T-cell (primary cell): ENCODE measurements at regions of chr22 and their contacts with region 1.

Region 1: GRCh38 chr22:44697423-44698141 is 4.4 kb upstream of the PRR5 start:
- DNase-seq: peak; percentile 45 to 91 (median 78)
- ATAC-seq: peak; percentile 14 to 31 (median 24)
- H3K4me3 ChIP-seq: peak overlapping the region in 1 of 2 donors; percentile 0
- H3K4me3 Mint-ChIP-seq: no peak overlapping the region
- H3K27ac ChIP-seq: no peak overlapping the region
- H3K27ac Mint-ChIP-seq: no peak overlapping the region
- H3K4me1 ChIP-seq: peaks cover 3 to 30% of the 10 kb centered on the region in 2 experiments
- H3K4me1 Mint-ChIP-seq: peaks cover 3 to 17% (median 7%) of the 10 kb centered on the region in 3 donors
- H3K27me3 ChIP-seq: no peaks in the 10 kb centered on the region
- H3K27me3 Mint-ChIP-seq: no peaks in the 10 kb centered on the region

Region 2: GRCh38 chr22:44719586-44720363 is 22.2 kb after region 1 on chr22:
- CTCF ChIA-PET with region 1: interaction called in 1 of 2 experiments, 11 read pairs
- POLR2A ChIA-PET with region 1: no interaction called
- DNase-seq: no peak
- ATAC-seq: no peak
- H3K4me3 ChIP-seq: no peak overlapping the region
- H3K4me3 Mint-ChIP-seq: no peak overlapping the region
- H3K27ac ChIP-seq: no peak overlapping the region
- H3K27ac Mint-ChIP-seq: no peak overlapping the region
- H3K4me1 ChIP-seq: peaks cover 0 to 20% of the 10 kb centered on the region in 2 experiments
- H3K4me1 Mint-ChIP-seq: peaks cover 5 to 10% (median 10%) of the 10 kb centered on the region in 3 donors
- H3K27me3 ChIP-seq: no peaks in the 10 kb centered on the region
- H3K27me3 Mint-ChIP-seq: no peaks in the 10 kb centered on the region